MCF 10A (cell line): ENCODE measurements at regions of chr12 and their contacts with region 1.

Region 1: GRCh38 chr12:67355578-67356379 is 86.6 kb downstream of the CAND1 start:
- DNase-seq: peak; percentile 59
- H3K4me3 Mint-ChIP-seq: no peak overlapping the region
- H3K27ac Mint-ChIP-seq: no peak overlapping the region
- H3K4me1 Mint-ChIP-seq: peaks cover 15% of the 10 kb centered on the region
- H3K27me3 Mint-ChIP-seq: no peaks in the 10 kb centered on the region
- CTCF ChIP-seq: peak; percentile 48

Region 2: GRCh38 chr12:67344979-67345710 is 10.6 kb before region 1 on chr12:
- CTCF ChIA-PET with region 1: interaction called, 26 read pairs
- POLR2A ChIA-PET with region 1: no interaction called
- intact Hi-C with region 1: no loop called
- DNase-seq: no peak
- H3K4me3 Mint-ChIP-seq: no peak overlapping the region
- H3K27ac Mint-ChIP-seq: no peak overlapping the region
- H3K4me1 Mint-ChIP-seq: no peaks in the 10 kb centered on the region
- H3K27me3 Mint-ChIP-seq: no peaks in the 10 kb centered on the region
- CTCF ChIP-seq: no peak

Region 3: DNA sequence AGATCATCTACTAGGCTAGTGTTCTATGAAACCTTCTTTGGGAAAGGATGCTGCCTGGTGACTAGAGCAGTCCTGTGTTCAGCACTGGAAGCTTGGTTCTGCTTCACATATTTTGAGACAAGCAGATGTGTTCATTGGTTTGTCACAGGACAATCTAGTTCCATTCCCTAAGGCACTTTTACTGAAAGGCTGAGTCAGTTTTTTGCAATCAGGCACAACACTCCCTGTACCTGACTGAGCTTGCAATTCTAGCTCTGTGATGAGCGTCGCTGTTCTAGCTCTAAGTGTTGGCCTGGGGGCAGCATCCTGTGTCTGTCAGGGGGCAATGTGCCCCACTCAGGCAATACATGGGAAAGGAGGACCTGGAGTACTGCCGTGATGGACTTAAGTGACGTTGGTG is 57.8 kb after region 1 on chr12:
- CTCF ChIA-PET with region 1: interaction called, 11 read pairs
- POLR2A ChIA-PET with region 1: no interaction called
- intact Hi-C with region 1: no loop called
- DNase-seq: peak; percentile 65
- H3K4me3 Mint-ChIP-seq: no peak overlapping the region
- H3K27ac Mint-ChIP-seq: no peak overlapping the region
- H3K4me1 Mint-ChIP-seq: peaks cover 13% of the 10 kb centered on the region
- H3K27me3 Mint-ChIP-seq: no peaks in the 10 kb centered on the region
- CTCF ChIP-seq: no peak

Region 4: DNA sequence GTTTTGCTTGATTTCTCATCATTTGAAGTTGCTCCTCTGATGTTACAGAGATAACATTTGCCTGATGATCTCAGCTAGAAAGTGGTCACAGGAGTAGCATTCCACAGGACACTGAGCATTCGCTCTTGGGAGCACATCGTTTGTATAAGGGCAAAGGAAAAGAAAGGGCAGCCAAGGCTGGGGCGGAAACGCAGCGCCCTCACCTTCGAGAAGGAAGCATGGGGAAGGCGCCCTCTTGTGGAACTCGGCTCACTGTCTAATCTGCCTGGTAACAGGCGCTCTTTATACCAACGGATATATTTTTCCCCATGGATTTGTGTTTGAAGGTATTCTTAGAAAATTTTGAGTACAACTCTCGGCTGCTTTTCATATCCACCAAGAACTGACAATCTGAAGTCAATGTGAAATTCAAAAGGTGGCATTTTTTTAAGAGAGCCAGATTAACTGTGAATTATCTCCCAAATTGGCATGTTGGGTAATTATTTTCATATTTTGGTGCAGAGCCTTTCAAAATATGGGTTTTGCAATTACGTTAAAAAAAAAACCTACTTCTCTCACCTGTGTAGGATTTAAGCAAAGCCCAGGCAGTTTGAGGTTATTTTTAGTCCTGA is 86.1 kb after region 1 on chr12:
- CTCF ChIA-PET with region 1: interaction called, 62 read pairs
- POLR2A ChIA-PET with region 1: interaction called, 3 read pairs
- intact Hi-C with region 1: loop called (anchors 2 kb)
- DNase-seq: peak; percentile 82
- H3K4me3 Mint-ChIP-seq: no peak overlapping the region
- H3K27ac Mint-ChIP-seq: no peak overlapping the region
- H3K4me1 Mint-ChIP-seq: no peaks in the 10 kb centered on the region
- H3K27me3 Mint-ChIP-seq: no peaks in the 10 kb centered on the region
- CTCF ChIP-seq: peak; percentile 78

Region 5: GRCh38 chr12:67692966-67693365 is 337.2 kb after region 1 on chr12:
- CTCF ChIA-PET with region 1: no interaction called
- POLR2A ChIA-PET with region 1: no interaction called
- intact Hi-C with region 1: no loop called
- DNase-seq: no peak
- H3K4me3 Mint-ChIP-seq: no peak overlapping the region
- H3K27ac Mint-ChIP-seq: no peak overlapping the region
- H3K4me1 Mint-ChIP-seq: peaks cover 4% of the 10 kb centered on the region
- H3K27me3 Mint-ChIP-seq: no peaks in the 10 kb centered on the region
- CTCF ChIP-seq: no peak

Region 6: DNA sequence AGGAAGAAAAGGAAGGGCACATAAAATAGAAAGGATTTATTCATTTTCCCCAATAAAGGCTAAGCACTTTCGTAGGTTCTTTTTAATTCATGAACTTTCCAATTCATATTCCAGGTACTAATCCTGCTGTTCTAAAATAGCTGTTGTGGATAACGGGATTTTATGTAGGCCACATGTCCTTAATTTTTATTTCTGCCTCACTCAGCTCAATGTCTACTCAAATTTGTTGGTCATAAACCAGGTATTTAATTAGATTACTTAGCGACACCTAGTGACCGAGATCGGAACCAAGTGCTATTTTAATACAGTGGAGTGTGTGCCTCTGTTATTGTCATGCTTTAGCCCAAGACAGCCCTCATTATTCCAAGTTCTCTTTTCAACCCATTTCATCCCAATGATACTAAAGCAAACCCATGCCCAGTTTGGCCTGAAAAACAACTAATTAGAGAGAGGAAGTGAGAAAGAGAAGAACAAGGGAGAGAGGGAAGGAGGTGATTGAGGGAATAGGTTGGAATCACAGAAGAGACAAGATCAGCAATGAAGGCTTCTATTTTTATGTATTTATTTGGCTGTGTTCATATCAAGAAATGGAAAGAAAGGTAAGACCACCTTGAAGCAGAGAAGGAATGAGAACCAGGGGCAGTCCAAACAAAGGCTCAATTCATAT is 587.6 kb after region 1 on chr12:
- CTCF ChIA-PET with region 1: interaction called, 86 read pairs
- POLR2A ChIA-PET with region 1: interaction called, 5 read pairs
- intact Hi-C with region 1: loop called (anchors 1 kb)
- DNase-seq: peak; percentile 78
- H3K4me3 Mint-ChIP-seq: no peak overlapping the region
- H3K27ac Mint-ChIP-seq: no peak overlapping the region
- H3K4me1 Mint-ChIP-seq: peaks cover 9% of the 10 kb centered on the region
- H3K27me3 Mint-ChIP-seq: no peaks in the 10 kb centered on the region
- CTCF ChIP-seq: peak; percentile 73

Region 7: GRCh38 chr12:68040450-68041075 is 684.8 kb after region 1 on chr12:
- CTCF ChIA-PET with region 1: interaction called, 4 read pairs
- POLR2A ChIA-PET with region 1: interaction called, 5 read pairs
- intact Hi-C with region 1: loop called (anchors 1 kb)
- DNase-seq: peak; percentile 85
- H3K4me3 Mint-ChIP-seq: no peak overlapping the region
- H3K27ac Mint-ChIP-seq: peak overlapping the region; percentile 93
- H3K4me1 Mint-ChIP-seq: peaks cover 19% of the 10 kb centered on the region
- H3K27me3 Mint-ChIP-seq: no peaks in the 10 kb centered on the region
- CTCF ChIP-seq: peak; percentile 85

Region 8: DNA sequence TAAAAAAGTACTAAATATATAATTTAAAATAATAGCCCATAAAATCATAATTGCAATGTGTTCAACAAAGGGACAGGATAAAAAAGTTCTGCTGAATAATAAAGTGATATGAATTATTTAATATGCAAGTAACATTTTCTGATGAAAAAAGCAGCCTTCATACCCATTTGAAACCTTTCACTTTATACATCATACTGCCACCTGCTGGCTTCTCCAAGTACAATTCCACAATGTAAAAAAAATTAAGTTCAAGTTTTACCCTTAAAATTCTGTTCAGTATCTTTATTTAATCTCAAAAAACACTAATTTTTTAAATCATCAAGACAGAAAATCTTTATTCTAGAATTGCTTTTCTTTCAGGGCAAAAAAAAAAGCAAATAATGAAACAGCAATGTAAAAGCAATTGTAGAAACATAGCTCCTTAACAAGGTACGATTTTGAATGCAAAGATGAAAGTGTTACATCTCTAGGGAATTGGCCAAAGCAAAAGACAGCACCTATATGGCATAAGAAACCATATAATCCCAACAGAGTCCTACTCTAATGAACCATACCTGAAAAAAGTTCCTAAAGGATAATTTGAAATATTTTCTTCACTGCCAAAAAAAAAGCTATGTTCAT is 961.4 kb after region 1 on chr12:
- CTCF ChIA-PET with region 1: interaction called, 5 read pairs
- POLR2A ChIA-PET with region 1: no interaction called
- intact Hi-C with region 1: loop called (anchors 5 kb)
- DNase-seq: peak; percentile 53
- H3K4me3 Mint-ChIP-seq: no peak overlapping the region
- H3K27ac Mint-ChIP-seq: no peak overlapping the region
- H3K4me1 Mint-ChIP-seq: no peaks in the 10 kb centered on the region
- H3K27me3 Mint-ChIP-seq: no peaks in the 10 kb centered on the region
- CTCF ChIP-seq: peak; percentile 62